ENCODE measurements at regions of chr5 and their contacts with region 1.

Region 1: GRCh38 chr5:41856644-41857491 is 13.4 kb downstream of the OXCT1 start:
- DNase-seq: peak in 8 of 9 donors; percentile 34 to 77 (median 71)
- ATAC-seq: peak; percentile 93
- H3K4me3 ChIP-seq: no peak overlapping the region
- H3K4me3 Mint-ChIP-seq: no peak overlapping the region
- H3K27ac ChIP-seq: peak overlapping the region; percentile 1
- H3K27ac Mint-ChIP-seq: no peak overlapping the region
- H3K4me1 ChIP-seq: no peaks in the 10 kb centered on the region
- H3K4me1 Mint-ChIP-seq: peaks cover under 1 to 13% (median 7%) of the 10 kb centered on the region in 7 donors
- H3K27me3 ChIP-seq: no peaks in the 10 kb centered on the region
- H3K27me3 Mint-ChIP-seq: no peaks in the 10 kb centered on the region

Region 2: DNA sequence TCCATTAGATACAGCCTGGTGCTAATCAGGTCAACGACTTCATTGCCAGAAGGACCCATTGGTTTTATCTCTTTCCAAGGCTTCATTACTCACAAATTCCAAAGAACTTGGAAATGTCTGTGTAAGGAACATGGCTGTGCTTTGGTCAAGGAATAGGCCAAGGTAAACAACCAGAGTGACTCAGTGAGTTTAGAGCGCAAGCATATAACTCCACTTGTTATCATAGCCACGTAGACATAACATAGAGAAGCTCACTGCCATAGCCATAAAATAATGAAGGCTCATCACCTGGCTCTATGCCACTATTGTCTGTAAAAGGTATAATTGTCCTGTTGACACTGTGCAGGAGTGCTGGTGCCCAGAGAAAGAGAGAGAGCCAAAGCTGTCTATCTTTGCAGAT is 207.2 kb before region 1 on chr5:
- CTCF ChIA-PET with region 1: no interaction called
- POLR2A ChIA-PET with region 1: no interaction called
- intact Hi-C with region 1: no loop called
- DNase-seq: no peak
- ATAC-seq: no peak
- H3K4me3 ChIP-seq: no peak overlapping the region
- H3K4me3 Mint-ChIP-seq: no peak overlapping the region
- H3K27ac ChIP-seq: no peak overlapping the region
- H3K27ac Mint-ChIP-seq: no peak overlapping the region
- H3K4me1 ChIP-seq: no peaks in the 10 kb centered on the region
- H3K4me1 Mint-ChIP-seq: no peaks in the 10 kb centered on the region
- H3K27me3 ChIP-seq: no peaks in the 10 kb centered on the region
- H3K27me3 Mint-ChIP-seq: peaks cover 0 to 6% (median 0%) of the 10 kb centered on the region in 5 donors

Region 3: DNA sequence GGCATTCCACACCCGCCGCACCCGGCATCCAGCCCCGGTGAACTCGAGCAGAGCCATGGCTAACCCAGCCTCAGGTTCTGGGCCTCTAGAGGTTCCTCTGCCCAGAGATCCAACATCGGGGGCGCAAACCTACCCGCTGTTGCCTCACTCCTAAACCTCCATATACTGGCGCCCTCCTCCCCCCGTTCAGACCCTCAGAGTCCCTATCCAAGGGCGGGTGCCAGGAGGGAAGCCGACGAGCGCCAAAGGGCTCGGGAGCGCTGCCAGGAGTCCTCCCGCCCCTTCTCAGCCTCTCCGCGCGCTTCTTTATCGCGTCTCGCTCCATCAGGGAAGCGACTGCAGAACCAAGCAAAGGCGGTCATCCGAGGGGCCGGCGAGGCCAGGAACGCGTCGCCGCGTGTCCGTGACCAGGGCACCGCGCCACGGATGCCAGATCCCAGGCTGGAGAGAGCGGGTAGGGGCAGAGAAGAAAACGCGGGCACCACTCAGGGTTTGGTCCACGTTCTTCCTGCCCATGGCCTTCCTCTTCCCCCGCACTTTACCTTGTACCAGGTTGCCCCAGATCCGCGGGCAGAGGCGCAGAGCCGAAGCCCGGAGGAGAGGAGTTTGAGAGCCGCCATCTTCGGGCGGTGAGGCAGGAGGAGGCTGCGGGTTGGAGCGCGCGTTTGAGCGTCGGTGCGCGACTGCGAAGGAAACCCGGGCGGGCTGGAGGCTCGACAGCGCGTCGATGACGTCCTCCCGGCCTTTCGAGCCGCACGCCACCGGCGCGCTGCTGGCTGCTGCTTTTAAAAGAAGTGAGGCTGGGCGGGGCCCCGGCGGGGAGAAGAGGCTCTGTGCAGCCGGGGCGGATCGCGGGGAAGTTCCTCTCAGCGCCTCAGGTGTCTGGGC is 13.1 kb after region 1 on chr5 and contains the start of gene OXCT1:
- CTCF ChIA-PET with region 1: interaction called, 9 read pairs
- POLR2A ChIA-PET with region 1: interaction called, 6 read pairs
- intact Hi-C with region 1: loop called (anchors 1 kb)
- DNase-seq: peak; percentile 88 to 96 (median 95)
- ATAC-seq: peak; percentile 97
- H3K4me3 ChIP-seq: peak within 1 kb of the TSS; percentile 91
- H3K4me3 Mint-ChIP-seq: peak within 1 kb of the TSS; percentile 85 to 94 (median 90)
- H3K27ac ChIP-seq: peak within 1 kb of the TSS; percentile 97
- H3K27ac Mint-ChIP-seq: peak within 1 kb of the TSS; percentile 89 to 98 (median 97)
- H3K4me1 ChIP-seq: peaks cover 16% of the 10 kb centered on the region in 2 donors
- H3K4me1 Mint-ChIP-seq: peaks cover 18 to 63% (median 57%) of the 10 kb centered on the region in 7 donors
- H3K27me3 ChIP-seq: no peaks in the 10 kb centered on the region
- H3K27me3 Mint-ChIP-seq: no peaks in the 10 kb centered on the region
- total RNA-seq, gene OXCT1: 18.6 to 53.1 (median 30.0) TPM

Region 4: DNA sequence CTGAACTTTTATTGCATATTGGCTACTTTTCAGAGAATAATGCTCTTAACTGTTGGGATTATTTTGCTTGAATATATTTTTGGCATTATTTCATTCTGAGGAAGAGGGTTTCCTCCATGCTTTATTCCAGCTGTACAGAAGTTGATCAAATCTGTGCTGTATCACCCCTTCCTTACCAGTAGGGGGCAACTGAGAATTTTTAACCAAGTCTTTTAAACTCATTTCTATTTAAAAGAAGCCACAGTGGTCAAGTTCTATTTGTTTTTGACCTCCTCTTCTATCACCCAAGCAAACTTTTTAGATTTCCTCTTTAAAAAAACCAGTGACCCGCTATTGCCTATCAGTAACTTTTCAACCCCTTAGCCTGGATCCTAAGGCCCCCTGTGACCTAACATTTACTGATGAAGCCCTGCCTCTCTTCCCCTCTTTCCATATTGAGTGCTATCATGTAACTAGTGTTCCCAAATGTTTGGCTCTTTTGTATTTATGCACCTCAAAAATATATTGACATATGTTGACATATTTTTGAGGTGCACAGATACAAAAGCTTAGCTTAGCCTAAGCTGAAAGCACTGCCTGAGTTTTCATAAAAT is 148.8 kb after region 1 on chr5:
- CTCF ChIA-PET with region 1: no interaction called
- POLR2A ChIA-PET with region 1: no interaction called
- intact Hi-C with region 1: loop called (anchors 1 to 5 kb)
- DNase-seq: peak in 5 of 9 donors; percentile 1 to 9 (median 6)
- ATAC-seq: no peak
- H3K4me3 ChIP-seq: no peak overlapping the region
- H3K4me3 Mint-ChIP-seq: no peak overlapping the region
- H3K27ac ChIP-seq: no peak overlapping the region
- H3K27ac Mint-ChIP-seq: no peak overlapping the region
- H3K4me1 ChIP-seq: no peaks in the 10 kb centered on the region
- H3K4me1 Mint-ChIP-seq: no peaks in the 10 kb centered on the region
- H3K27me3 ChIP-seq: no peaks in the 10 kb centered on the region
- H3K27me3 Mint-ChIP-seq: peaks cover 4 to 14% (median 6%) of the 10 kb centered on the region in 5 donors

Region 5: GRCh38 chr5:42057254-42057690 is 200.4 kb after region 1 on chr5:
- CTCF ChIA-PET with region 1: interaction called, 112 read pairs
- POLR2A ChIA-PET with region 1: interaction called, 6 read pairs
- intact Hi-C with region 1: loop called (anchors 1 kb)
- DNase-seq: peak in 8 of 9 donors; percentile 25 to 58 (median 51)
- ATAC-seq: peak; percentile 87
- H3K4me3 ChIP-seq: no peak overlapping the region
- H3K4me3 Mint-ChIP-seq: no peak overlapping the region
- H3K27ac ChIP-seq: no peak overlapping the region
- H3K27ac Mint-ChIP-seq: no peak overlapping the region
- H3K4me1 ChIP-seq: no peaks in the 10 kb centered on the region
- H3K4me1 Mint-ChIP-seq: peaks cover 0 to 4% (median 0%) of the 10 kb centered on the region in 7 donors
- H3K27me3 ChIP-seq: no peaks in the 10 kb centered on the region
- H3K27me3 Mint-ChIP-seq: peaks cover 0 to 12% (median 5%) of the 10 kb centered on the region in 5 donors

Region 6: GRCh38 chr5:42583322-42583721 is 726.5 kb after region 1 on chr5:
- CTCF ChIA-PET with region 1: no interaction called
- POLR2A ChIA-PET with region 1: no interaction called
- intact Hi-C with region 1: loop called in 1 of 2 experiments (anchors 1 kb)
- DNase-seq: peak in 5 of 9 donors; percentile 8 to 24 (median 12)
- ATAC-seq: peak; percentile 68
- H3K4me3 ChIP-seq: no peak overlapping the region
- H3K4me3 Mint-ChIP-seq: no peak overlapping the region
- H3K27ac ChIP-seq: no peak overlapping the region
- H3K27ac Mint-ChIP-seq: no peak overlapping the region
- H3K4me1 ChIP-seq: no peaks in the 10 kb centered on the region
- H3K4me1 Mint-ChIP-seq: peaks cover 0 to 6% (median 2%) of the 10 kb centered on the region in 7 donors
- H3K27me3 ChIP-seq: peaks cover 0 to 6% of the 10 kb centered on the region in 2 donors
- H3K27me3 Mint-ChIP-seq: peaks cover 15 to 39% (median 21%) of the 10 kb centered on the region in 5 donors

Region 7: GRCh38 chr5:42889311-42889933 is 1032.6 kb after region 1 on chr5:
- CTCF ChIA-PET with region 1: interaction called, 7 read pairs
- POLR2A ChIA-PET with region 1: no interaction called
- intact Hi-C with region 1: loop called in 1 of 2 experiments (anchors 1 kb)
- DNase-seq: peak in 8 of 9 donors; percentile 24 to 56 (median 49)
- ATAC-seq: peak; percentile 87
- H3K4me3 ChIP-seq: no peak overlapping the region
- H3K4me3 Mint-ChIP-seq: no peak overlapping the region
- H3K27ac ChIP-seq: no peak overlapping the region
- H3K27ac Mint-ChIP-seq: no peak overlapping the region
- H3K4me1 ChIP-seq: no peaks in the 10 kb centered on the region
- H3K4me1 Mint-ChIP-seq: no peaks in the 10 kb centered on the region
- H3K27me3 ChIP-seq: no peaks in the 10 kb centered on the region
- H3K27me3 Mint-ChIP-seq: peaks cover 3 to 29% (median 6%) of the 10 kb centered on the region in 5 donors